Heart right ventricle (tissue), 16 donors: ENCODE measurements at regions of chr3 and their contacts with region 1.

Region 1: GRCh38 chr3:172201136-172201869 is 161.9 kb downstream of the FNDC3B start:
- DNase-seq: peak; percentile 88 to 92
- ATAC-seq: peak; percentile 87 to 95 (median 90)
- H3K4me3 ChIP-seq: peak overlapping the region in 4 of 10 donors; percentile 2 to 22 (median 6)
- H3K27ac ChIP-seq: peak overlapping the region; percentile 69 to 92 (median 82)
- H3K4me1 ChIP-seq: peaks cover 11 to 83% (median 60%) of the 10 kb centered on the region in 9 donors
- H3K27me3 ChIP-seq: no peaks in the 10 kb centered on the region
- CTCF ChIP-seq: no peak

Region 2: GRCh38 chr3:170644711-170645110 is 1556.6 kb before region 1 on chr3:
- intact Hi-C with region 1: no loop called
- DNase-seq: no peak
- ATAC-seq: no peak
- H3K4me3 ChIP-seq: no peak overlapping the region
- H3K27ac ChIP-seq: no peak overlapping the region
- H3K4me1 ChIP-seq: peaks cover 0 to 15% (median 9%) of the 10 kb centered on the region in 9 donors
- H3K27me3 ChIP-seq: no peaks in the 10 kb centered on the region
- CTCF ChIP-seq: no peak

Region 3: GRCh38 chr3:171206283-171206682 is 995.0 kb before region 1 on chr3:
- intact Hi-C with region 1: no loop called
- DNase-seq: no peak
- ATAC-seq: no peak
- H3K4me3 ChIP-seq: no peak overlapping the region
- H3K27ac ChIP-seq: no peak overlapping the region
- H3K4me1 ChIP-seq: peaks cover 0 to 10% (median 2%) of the 10 kb centered on the region in 9 donors
- H3K27me3 ChIP-seq: no peaks in the 10 kb centered on the region
- CTCF ChIP-seq: no peak

Region 4: DNA sequence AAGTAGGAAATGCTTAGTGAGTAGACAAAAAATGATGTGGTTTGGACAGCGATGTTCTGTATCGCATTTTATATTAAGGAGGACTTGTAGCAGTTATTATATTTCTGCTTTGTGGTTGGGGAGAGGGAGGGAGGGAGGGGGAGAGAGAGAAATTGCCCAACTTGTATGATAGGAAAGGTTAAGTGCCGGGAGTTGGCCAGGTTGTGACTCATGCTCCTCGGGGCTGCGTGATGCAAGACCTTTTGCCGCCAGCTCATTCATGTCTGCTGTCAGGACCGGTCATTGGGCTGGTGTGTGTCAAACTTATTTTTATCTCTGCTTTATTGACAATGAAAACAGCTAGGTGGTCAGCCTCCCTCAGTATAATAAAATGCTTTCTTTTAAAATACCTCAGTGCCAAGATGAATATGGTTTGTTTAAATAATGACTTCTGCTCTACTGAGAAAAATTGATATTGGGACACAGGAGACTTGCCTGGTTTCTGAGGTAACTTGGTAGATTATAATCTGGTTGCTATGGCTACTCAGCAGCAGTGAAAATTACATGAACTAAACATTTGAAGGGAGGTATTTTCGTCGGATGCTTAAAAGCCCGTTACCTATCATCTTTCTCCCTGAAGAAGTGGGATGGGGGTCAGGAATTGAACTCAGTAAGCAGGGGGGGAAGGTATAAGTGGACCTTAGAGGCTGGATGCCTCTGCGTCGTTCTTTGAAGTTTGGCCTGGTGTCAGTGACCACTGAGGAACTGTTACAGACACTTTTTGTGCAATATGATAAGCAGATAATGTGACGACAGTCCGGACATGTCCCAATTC is 71.2 kb before region 1 on chr3:
- intact Hi-C with region 1: loop called in 2 of 10 experiments (anchors 5 kb)
- DNase-seq: peak; percentile 84 to 88
- ATAC-seq: peak; percentile 85 to 96 (median 90)
- H3K4me3 ChIP-seq: no peak overlapping the region
- H3K27ac ChIP-seq: peak overlapping the region; percentile 19 to 88 (median 72)
- H3K4me1 ChIP-seq: peaks cover 22 to 100% (median 63%) of the 10 kb centered on the region in 9 donors
- H3K27me3 ChIP-seq: no peaks in the 10 kb centered on the region
- CTCF ChIP-seq: no peak

Region 5: GRCh38 chr3:172138795-172139441 is 62.4 kb before region 1 on chr3:
- intact Hi-C with region 1: loop called in 1 of 10 experiments (anchors 5 kb)
- DNase-seq: peak in 1 of 2 donors; percentile 68
- ATAC-seq: peak; percentile 36 to 67 (median 56)
- H3K4me3 ChIP-seq: no peak overlapping the region
- H3K27ac ChIP-seq: peak overlapping the region in 8 of 10 donors; percentile 45 to 88 (median 75)
- H3K4me1 ChIP-seq: peaks cover 38 to 100% (median 81%) of the 10 kb centered on the region in 9 donors
- H3K27me3 ChIP-seq: no peaks in the 10 kb centered on the region
- CTCF ChIP-seq: no peak

Region 6: DNA sequence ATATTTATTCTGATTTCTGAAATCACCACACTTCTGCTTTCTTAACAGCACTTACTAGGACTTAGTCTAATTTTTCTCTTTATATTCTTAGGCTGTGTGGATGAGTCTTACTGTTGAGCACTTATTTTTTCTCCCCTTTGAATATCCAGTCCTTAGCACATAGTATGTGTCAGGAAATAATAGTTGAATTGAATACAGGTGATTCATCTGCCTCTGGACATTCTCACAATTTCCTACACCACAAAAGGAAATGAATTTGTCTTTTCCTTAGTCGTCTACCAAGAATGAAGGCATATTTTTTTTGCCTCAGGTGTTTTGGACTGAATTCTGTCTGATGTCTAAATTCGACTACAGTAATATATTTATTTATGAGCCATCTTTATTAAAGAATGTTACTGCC is 42.7 kb after region 1 on chr3:
- intact Hi-C with region 1: no loop called
- DNase-seq: no peak
- ATAC-seq: no peak
- H3K4me3 ChIP-seq: no peak overlapping the region
- H3K27ac ChIP-seq: no peak overlapping the region
- H3K4me1 ChIP-seq: peaks cover 0 to 42% (median 25%) of the 10 kb centered on the region in 9 donors
- H3K27me3 ChIP-seq: no peaks in the 10 kb centered on the region
- CTCF ChIP-seq: no peak

Region 7: GRCh38 chr3:172289582-172289981 is 88.3 kb after region 1 on chr3:
- intact Hi-C with region 1: loop called in 1 of 10 experiments (anchors 5 kb)
- DNase-seq: peak; percentile 39 to 51
- ATAC-seq: peak in 7 of 8 donors; percentile 38 to 75 (median 55)
- H3K4me3 ChIP-seq: peak overlapping the region in 2 of 10 donors; percentile 15 to 17
- H3K27ac ChIP-seq: peak overlapping the region; percentile 40 to 84 (median 68)
- H3K4me1 ChIP-seq: peaks cover 14 to 84% (median 60%) of the 10 kb centered on the region in 9 donors
- H3K27me3 ChIP-seq: no peaks in the 10 kb centered on the region
- CTCF ChIP-seq: peak; percentile 25 to 70 (median 57)